GM13976 (cell line): ENCODE measurements at regions of chr6 and their contacts with region 1.

Region 1: GRCh38 chr6:132300323-132300949 is 100.8 kb downstream of the MOXD1 start:
- DNase-seq: peak; percentile 24
- CTCF ChIP-seq: peak; percentile 56

Region 2: DNA sequence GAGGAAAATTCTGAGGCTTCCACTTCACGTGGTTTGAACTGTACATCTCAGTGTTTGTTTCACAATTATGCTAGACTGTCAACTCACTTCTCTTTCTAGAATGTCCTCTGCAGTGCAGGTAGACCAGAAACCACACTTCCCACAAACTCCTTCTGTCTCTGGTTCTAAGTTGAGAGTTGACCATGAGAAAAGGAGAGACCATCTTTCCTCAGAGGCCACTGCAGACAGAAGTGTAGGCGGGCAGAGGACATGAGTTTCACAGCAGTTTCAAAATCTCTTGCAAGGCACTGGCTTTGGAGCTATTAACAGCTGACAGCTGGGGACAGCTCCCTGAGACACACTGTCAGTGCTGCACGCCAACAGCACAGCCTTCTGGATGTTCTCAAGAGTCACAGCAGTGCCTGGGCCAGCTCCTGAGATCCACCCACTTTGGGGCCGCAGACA is 156.3 kb after region 1 on chr6:
- in situ Hi-C with region 1: loop called (anchors 10 kb)
- DNase-seq: peak; percentile 54
- CTCF ChIP-seq: peak; percentile 64